ENCODE measurements at regions of chr20 and their contacts with region 1.

Region 1: GRCh38 chr20:21615617-21616080 is 89.8 kb upstream of the PAX1 start:
- DNase-seq: peak; percentile 61
- H3K4me3 Mint-ChIP-seq: no peak overlapping the region
- H3K27ac Mint-ChIP-seq: no peak overlapping the region
- H3K4me1 Mint-ChIP-seq: no peaks in the 10 kb centered on the region
- H3K27me3 Mint-ChIP-seq: peaks cover 25% of the 10 kb centered on the region
- CTCF ChIP-seq: peak; percentile 83

Region 2: DNA sequence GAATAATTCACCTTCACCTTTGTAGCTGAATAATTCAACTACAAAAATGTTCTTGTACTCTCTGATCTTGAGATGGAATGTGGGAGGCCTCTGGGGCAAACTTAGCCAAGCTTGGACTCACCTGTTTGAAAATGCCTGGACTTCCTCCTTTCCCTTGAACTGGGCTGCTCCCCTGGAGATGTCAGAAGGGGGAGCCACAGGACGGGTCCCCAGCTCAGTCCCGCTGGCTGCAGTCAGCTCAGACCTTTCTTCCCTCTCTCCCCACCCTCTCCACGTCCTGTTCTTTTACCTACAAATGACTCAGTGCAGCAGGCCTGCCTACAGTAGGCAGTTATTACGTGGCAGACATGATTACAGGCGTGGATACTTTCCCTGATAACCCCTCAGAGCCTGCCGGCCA is 771.7 kb before region 1 on chr20:
- CTCF ChIA-PET with region 1: interaction called, 101 read pairs
- POLR2A ChIA-PET with region 1: no interaction called
- intact Hi-C with region 1: no loop called
- DNase-seq: peak; percentile 23
- H3K4me3 Mint-ChIP-seq: no peak overlapping the region
- H3K27ac Mint-ChIP-seq: no peak overlapping the region
- H3K4me1 Mint-ChIP-seq: no peaks in the 10 kb centered on the region
- H3K27me3 Mint-ChIP-seq: no peaks in the 10 kb centered on the region
- CTCF ChIP-seq: no peak

Region 3: GRCh38 chr20:21301940-21302663 is 313.5 kb before region 1 on chr20:
- CTCF ChIA-PET with region 1: no interaction called
- POLR2A ChIA-PET with region 1: no interaction called
- intact Hi-C with region 1: no loop called
- DNase-seq: no peak
- H3K4me3 Mint-ChIP-seq: peak overlapping the region; percentile 87
- H3K27ac Mint-ChIP-seq: peak overlapping the region; percentile 99
- H3K4me1 Mint-ChIP-seq: peaks cover 18% of the 10 kb centered on the region
- H3K27me3 Mint-ChIP-seq: no peaks in the 10 kb centered on the region
- CTCF ChIP-seq: no peak

Region 4: DNA sequence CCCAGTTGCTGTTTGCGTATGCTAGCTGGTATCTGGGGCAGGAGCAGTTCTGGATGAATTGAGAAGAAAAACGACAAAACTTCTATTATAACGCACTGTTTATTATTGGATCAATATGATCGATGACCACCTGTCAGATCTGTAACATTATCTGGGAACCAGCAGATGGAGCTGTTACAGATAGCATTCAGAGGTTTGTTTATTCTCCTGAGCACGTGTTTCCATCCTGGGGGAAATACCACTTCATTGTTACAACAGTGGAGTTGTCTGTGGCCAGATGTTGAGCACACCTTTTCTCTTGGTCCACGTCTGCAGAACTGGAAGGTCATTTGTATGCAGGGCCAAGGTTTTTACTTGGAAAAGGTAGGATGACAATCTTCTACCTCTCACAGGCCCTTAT is 85.8 kb before region 1 on chr20:
- CTCF ChIA-PET with region 1: interaction called, 35 read pairs
- POLR2A ChIA-PET with region 1: interaction called, 4 read pairs
- intact Hi-C with region 1: loop called (anchors 5 kb)
- DNase-seq: peak; percentile 39
- H3K4me3 Mint-ChIP-seq: no peak overlapping the region
- H3K27ac Mint-ChIP-seq: no peak overlapping the region
- H3K4me1 Mint-ChIP-seq: no peaks in the 10 kb centered on the region
- H3K27me3 Mint-ChIP-seq: peaks cover 32% of the 10 kb centered on the region
- CTCF ChIP-seq: peak; percentile 46

Region 5: GRCh38 chr20:21577551-21577950 is 38.1 kb before region 1 on chr20:
- CTCF ChIA-PET with region 1: interaction called, 45 read pairs
- POLR2A ChIA-PET with region 1: no interaction called
- intact Hi-C with region 1: no loop called
- DNase-seq: no peak
- H3K4me3 Mint-ChIP-seq: no peak overlapping the region
- H3K27ac Mint-ChIP-seq: no peak overlapping the region
- H3K4me1 Mint-ChIP-seq: no peaks in the 10 kb centered on the region
- H3K27me3 Mint-ChIP-seq: peaks cover 72% of the 10 kb centered on the region
- CTCF ChIP-seq: no peak

Region 6: GRCh38 chr20:21601799-21602198 is 13.8 kb before region 1 on chr20:
- CTCF ChIA-PET with region 1: interaction called, 64 read pairs
- POLR2A ChIA-PET with region 1: interaction called, 4 read pairs
- intact Hi-C with region 1: no loop called
- DNase-seq: no peak
- H3K4me3 Mint-ChIP-seq: no peak overlapping the region
- H3K27ac Mint-ChIP-seq: no peak overlapping the region
- H3K4me1 Mint-ChIP-seq: no peaks in the 10 kb centered on the region
- H3K27me3 Mint-ChIP-seq: peaks cover 21% of the 10 kb centered on the region
- CTCF ChIP-seq: no peak

Region 7: DNA sequence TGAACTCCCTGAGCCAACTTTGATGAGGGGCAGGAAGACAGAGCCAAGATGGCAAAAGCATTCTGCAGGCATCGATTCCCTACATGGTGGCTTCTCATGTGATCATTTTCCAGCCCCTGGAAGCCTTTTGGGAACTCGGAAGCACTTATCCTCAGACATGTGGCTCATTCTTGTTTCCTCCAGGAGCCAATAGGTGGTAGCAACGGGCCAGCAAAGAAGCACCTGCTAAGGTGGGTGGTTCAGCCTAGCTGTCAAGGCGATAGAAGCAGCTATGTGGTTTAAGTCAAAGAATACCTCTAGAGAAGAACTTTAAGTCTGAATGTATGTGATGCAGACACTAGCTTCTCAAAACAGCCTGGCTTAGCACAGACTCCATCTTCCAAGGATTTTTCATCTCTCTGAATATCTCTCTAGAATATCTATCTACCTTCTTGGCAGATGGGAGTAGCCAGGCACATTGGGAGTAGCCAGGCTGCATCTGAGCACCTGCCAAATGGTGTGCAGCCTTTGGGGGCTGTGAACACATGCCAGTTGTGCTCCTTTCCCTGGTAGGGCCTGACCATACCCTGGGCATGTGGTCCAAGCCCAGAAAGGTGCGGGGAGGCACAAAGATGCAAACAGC is 25.0 kb after region 1 on chr20:
- CTCF ChIA-PET with region 1: interaction called, 15 read pairs
- POLR2A ChIA-PET with region 1: no interaction called
- intact Hi-C with region 1: no loop called
- DNase-seq: peak; percentile 45
- H3K4me3 Mint-ChIP-seq: no peak overlapping the region
- H3K27ac Mint-ChIP-seq: no peak overlapping the region
- H3K4me1 Mint-ChIP-seq: no peaks in the 10 kb centered on the region
- H3K27me3 Mint-ChIP-seq: peaks cover 17% of the 10 kb centered on the region
- CTCF ChIP-seq: peak; percentile 37

Region 8: GRCh38 chr20:21693322-21693721 is 77.7 kb after region 1 on chr20:
- CTCF ChIA-PET with region 1: no interaction called
- POLR2A ChIA-PET with region 1: no interaction called
- intact Hi-C with region 1: no loop called
- DNase-seq: peak; percentile 9
- H3K4me3 Mint-ChIP-seq: no peak overlapping the region
- H3K27ac Mint-ChIP-seq: no peak overlapping the region
- H3K4me1 Mint-ChIP-seq: peaks cover 7% of the 10 kb centered on the region
- H3K27me3 Mint-ChIP-seq: peaks cover 42% of the 10 kb centered on the region
- CTCF ChIP-seq: peak; percentile 10

Region 9: GRCh38 chr20:21874127-21874526 is 258.5 kb after region 1 on chr20:
- CTCF ChIA-PET with region 1: no interaction called
- POLR2A ChIA-PET with region 1: no interaction called
- intact Hi-C with region 1: no loop called
- DNase-seq: no peak
- H3K4me3 Mint-ChIP-seq: no peak overlapping the region
- H3K27ac Mint-ChIP-seq: no peak overlapping the region
- H3K4me1 Mint-ChIP-seq: no peaks in the 10 kb centered on the region
- H3K27me3 Mint-ChIP-seq: peaks cover 7% of the 10 kb centered on the region
- CTCF ChIP-seq: no peak

Measured in MCF 10A (cell line).